CD4-positive, alpha-beta memory T cell (primary cell): ENCODE measurements at regions of chr2 and their contacts with region 1.

Region 1: DNA sequence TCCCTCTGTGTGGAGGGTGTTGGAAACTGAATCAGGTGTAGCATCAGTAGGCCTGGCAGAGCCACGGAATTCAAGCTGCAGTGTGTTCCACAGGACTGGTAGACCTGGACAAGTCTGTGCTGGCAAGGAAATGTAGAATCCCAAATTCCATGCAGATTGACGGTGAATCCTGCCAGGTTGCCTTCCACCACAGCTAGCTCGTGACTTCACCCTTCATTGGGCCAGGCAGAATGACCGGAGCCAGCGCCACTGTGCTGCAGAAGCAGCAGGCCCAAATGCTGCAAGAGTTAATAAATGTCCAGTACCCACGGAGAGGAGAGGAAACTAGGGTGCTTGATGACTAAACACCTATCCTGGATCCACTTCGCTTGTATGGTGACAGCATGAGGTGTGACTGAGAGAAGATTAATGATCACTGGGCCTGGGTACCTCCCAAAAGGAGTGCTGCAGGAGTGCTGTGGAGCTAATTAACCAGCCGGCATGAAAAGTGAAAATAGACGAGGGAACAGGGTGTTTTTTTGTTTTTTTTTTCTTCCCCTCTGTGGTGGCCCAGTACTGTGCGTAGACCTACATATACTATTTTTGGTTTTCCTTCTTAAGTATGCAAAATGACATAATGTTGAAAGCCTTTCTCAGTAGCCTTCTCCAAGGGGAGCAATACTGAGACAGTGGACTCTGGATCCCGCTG is 122.2 kb downstream of the TANC1 start:
- DNase-seq: peak in 1 of 5 donors; percentile 7
- H3K4me3 ChIP-seq: no peak overlapping the region
- H3K4me3 Mint-ChIP-seq: peak overlapping the region in 6 of 8 donors; percentile 41 to 63 (median 60)
- H3K27ac ChIP-seq: no peak overlapping the region
- H3K27ac Mint-ChIP-seq: peak overlapping the region in 6 of 7 donors; percentile 6 to 88 (median 68)
- H3K4me1 ChIP-seq: peaks cover 42% of the 10 kb centered on the region
- H3K4me1 Mint-ChIP-seq: peaks cover 23 to 74% (median 39%) of the 10 kb centered on the region in 4 donors
- H3K27me3 ChIP-seq: no peaks in the 10 kb centered on the region
- H3K27me3 Mint-ChIP-seq: no peaks in the 10 kb centered on the region

Region 2: GRCh38 chr2:158968396-158969161 is 122.1 kb before region 1 on chr2 and contains the start of gene TANC1:
- CTCF ChIA-PET with region 1: no interaction called
- POLR2A ChIA-PET with region 1: no interaction called
- intact Hi-C with region 1: loop called (anchors 10 kb)
- DNase-seq: peak; percentile 25 to 44 (median 41)
- H3K4me3 ChIP-seq: peak within 1 kb of the TSS; percentile 17 to 35
- H3K4me3 Mint-ChIP-seq: peak within 1 kb of the TSS; percentile 70 to 87 (median 80)
- H3K27ac ChIP-seq: no peak within 1 kb of the TSS
- H3K27ac Mint-ChIP-seq: peak within 1 kb of the TSS in 1 of 7 donors; percentile 10
- H3K4me1 ChIP-seq: peaks cover 7% of the 10 kb centered on the region
- H3K4me1 Mint-ChIP-seq: peaks cover 7 to 19% (median 15%) of the 10 kb centered on the region in 4 donors
- H3K27me3 ChIP-seq: peaks cover 13% of the 10 kb centered on the region
- H3K27me3 Mint-ChIP-seq: peaks cover 32 to 35% of the 10 kb centered on the region in 2 donors
- total RNA-seq, gene TANC1: 0.35 to 0.50 TPM